PC-3 (cell line): ENCODE measurements at regions of chr10 and their contacts with region 1.

Region 1: DNA sequence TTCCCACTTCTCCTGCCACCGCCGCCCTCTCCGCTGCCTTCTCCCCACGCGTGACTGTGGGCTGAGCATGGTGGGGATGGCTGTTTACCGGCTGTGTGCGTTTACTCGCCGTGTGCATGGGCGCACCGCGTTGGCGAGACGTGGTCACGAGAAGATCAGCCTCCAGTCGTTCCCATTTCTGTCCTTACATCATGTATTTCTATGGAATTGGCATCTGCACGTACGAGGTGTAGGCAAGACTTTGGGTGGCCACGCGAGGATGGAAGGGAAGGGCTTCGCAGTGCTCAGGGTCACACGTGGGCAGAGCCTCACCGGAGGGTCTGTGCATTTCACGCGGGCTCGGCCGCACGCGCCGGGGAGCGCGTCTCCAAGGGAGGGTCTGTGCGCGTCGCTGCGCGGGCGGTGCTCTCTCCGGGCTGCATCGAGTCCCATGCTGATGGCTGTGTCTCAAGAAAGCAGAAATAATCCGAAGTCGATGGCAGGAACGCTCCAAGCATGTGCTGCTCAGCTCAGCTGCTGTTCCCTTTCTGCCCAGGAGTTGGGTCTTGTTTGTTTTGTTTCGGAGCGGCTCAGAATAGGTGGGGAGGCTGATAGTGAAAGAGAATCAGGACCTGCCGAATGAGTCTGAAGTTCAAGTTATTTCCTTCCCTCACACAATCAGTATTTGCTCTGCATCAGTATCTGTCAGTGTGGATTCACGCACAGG is 973 bp downstream of the CAMK1D start:
- DNase-seq: peak; percentile 13
- ATAC-seq: peak; percentile 41
- H3K4me3 ChIP-seq: peak overlapping the region; percentile 81
- H3K27ac ChIP-seq: no peak overlapping the region
- H3K4me1 ChIP-seq: peaks cover 8% of the 10 kb centered on the region; the same call in 1 of the 2 replicates
- H3K27me3 ChIP-seq: no peaks in the 10 kb centered on the region
- CTCF ChIP-seq: no peak

Region 2: DNA sequence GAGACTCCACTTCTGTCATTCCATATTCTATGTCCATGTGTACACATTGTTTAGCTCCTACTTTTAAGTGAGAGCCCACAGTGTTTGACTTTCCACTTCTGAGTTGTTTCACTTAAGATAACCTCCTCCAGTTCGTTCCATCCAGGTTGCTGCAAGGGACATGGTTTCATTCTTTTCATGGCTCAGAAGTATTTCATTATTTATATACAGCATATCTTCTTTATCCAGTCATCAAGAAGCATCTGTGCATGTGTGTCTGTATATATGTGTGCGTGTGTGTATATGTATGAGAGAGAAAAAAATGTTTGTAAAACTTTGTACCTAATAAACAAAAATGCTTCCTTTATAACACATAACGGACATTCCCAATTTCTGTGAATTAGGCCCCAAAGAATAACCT is 214.7 kb before region 1 on chr10:
- CTCF ChIA-PET with region 1: no interaction called
- POLR2A ChIA-PET with region 1: interaction called, 15 read pairs
- intact Hi-C with region 1: no loop called
- DNase-seq: no peak
- ATAC-seq: no peak
- H3K4me3 ChIP-seq: no peak overlapping the region
- H3K27ac ChIP-seq: no peak overlapping the region
- H3K4me1 ChIP-seq: no peaks in the 10 kb centered on the region
- H3K27me3 ChIP-seq: no peaks in the 10 kb centered on the region
- CTCF ChIP-seq: no peak

Region 3: DNA sequence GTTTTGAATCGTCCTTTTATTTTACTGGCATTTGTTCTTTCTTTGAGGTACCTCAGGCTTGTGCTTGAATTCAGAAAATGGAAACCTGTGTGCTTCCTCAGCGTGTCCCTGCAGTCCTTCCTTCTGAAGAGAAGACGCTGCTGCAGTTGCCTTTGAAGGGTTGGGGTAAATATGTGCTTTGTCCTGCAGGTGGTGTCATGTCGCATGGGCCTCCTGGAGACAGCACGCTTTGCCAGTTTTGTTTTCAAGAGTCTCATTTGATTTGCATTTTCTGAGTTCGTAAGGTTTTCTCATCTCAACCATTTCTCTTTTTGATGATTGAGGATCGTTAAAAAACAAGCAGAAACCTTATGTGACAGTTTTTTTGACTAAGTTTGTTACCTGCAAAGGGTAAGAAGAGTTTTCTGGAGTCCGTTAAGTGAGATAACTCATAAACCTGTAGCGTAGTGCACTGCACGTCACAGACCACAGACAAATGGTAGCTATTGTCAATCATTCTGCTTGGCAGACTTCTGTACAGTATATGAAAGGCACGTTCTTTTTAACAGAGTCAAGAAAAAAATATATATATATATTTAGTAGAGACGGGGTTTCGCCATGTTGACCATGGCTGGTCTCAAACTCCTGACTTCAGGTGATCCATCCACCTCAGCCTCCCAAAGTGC is 97.3 kb before region 1 on chr10:
- CTCF ChIA-PET with region 1: no interaction called
- POLR2A ChIA-PET with region 1: no interaction called
- intact Hi-C with region 1: no loop called
- DNase-seq: peak; percentile 22
- ATAC-seq: peak; percentile 29; the same call in 1 of the 2 replicates
- H3K4me3 ChIP-seq: no peak overlapping the region
- H3K27ac ChIP-seq: no peak overlapping the region
- H3K4me1 ChIP-seq: no peaks in the 10 kb centered on the region
- H3K27me3 ChIP-seq: no peaks in the 10 kb centered on the region
- CTCF ChIP-seq: peak; percentile 53

Region 4: GRCh38 chr10:12271210-12271540 is 79.1 kb before region 1 on chr10:
- CTCF ChIA-PET with region 1: no interaction called
- POLR2A ChIA-PET with region 1: no interaction called
- intact Hi-C with region 1: loop called (anchors 5 kb)
- DNase-seq: no peak
- ATAC-seq: peak; percentile 35
- H3K4me3 ChIP-seq: no peak overlapping the region
- H3K27ac ChIP-seq: no peak overlapping the region
- H3K4me1 ChIP-seq: peaks cover 6% of the 10 kb centered on the region; the same call in 1 of the 2 replicates
- H3K27me3 ChIP-seq: no peaks in the 10 kb centered on the region
- CTCF ChIP-seq: no peak

Region 5: GRCh38 chr10:12394236-12395033 is 44.1 kb after region 1 on chr10:
- CTCF ChIA-PET with region 1: interaction called, 6 read pairs
- POLR2A ChIA-PET with region 1: no interaction called
- intact Hi-C with region 1: loop called (anchors 5 kb)
- DNase-seq: peak; percentile 69
- ATAC-seq: peak; percentile 83
- H3K4me3 ChIP-seq: no peak overlapping the region
- H3K27ac ChIP-seq: peak overlapping the region; percentile 91
- H3K4me1 ChIP-seq: peaks cover 16% of the 10 kb centered on the region
- H3K27me3 ChIP-seq: no peaks in the 10 kb centered on the region
- CTCF ChIP-seq: no peak

Region 6: DNA sequence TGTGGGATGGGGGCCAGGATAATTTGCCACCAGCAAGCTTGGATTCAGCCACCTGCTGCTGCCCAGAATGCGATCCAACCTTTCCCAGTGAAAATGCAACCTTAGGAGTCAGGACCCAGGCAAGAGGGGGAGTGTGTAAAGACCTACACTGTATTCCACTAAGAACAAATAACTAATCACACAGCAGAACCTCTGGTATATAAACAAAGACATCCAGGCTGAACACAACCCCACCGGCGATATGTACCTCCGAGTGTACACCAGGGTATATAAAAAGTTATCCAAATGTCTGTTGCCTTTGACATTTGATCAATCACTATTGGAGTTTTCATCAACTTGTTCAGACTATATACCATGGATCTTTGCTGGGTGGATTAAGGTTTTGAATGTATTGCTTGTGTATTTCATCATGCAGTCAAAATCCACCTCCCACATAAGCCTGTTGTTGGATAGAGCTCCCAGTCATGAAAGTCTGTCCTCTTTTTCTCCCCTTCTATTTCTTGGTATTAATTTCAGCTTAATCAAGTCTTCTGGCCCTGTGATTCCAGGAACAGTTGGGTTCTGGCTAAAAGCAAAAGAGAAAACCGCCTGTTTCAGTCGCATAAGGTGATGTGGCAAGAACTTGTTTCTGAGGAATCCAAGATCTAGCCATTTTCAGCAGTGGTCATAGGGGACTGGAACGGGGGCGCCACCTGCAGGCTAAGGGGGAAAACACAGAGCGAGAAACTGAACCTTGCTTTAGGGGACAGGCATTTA is 360.5 kb after region 1 on chr10:
- CTCF ChIA-PET with region 1: no interaction called
- POLR2A ChIA-PET with region 1: no interaction called
- intact Hi-C with region 1: loop called (anchors 5 kb)
- DNase-seq: peak; percentile 63
- ATAC-seq: peak; percentile 25
- H3K4me3 ChIP-seq: no peak overlapping the region
- H3K27ac ChIP-seq: peak overlapping the region; percentile 100; the same call in 1 of the 2 replicates
- H3K4me1 ChIP-seq: peaks cover 62% of the 10 kb centered on the region
- H3K27me3 ChIP-seq: no peaks in the 10 kb centered on the region
- CTCF ChIP-seq: peak; percentile 76